Activated T-helper 1 cell treated with anti-CD3 and anti-CD28 coated beads, Interleukin-12 subunit alpha, Interleukin-12 subunit beta, Interleukin-2, Interleukin-4 antibody, amounts not matched to agents 30 ng/mL and 10 ng/mL and 1 ng/mL, durations not matched to agents 14 hours and 24 hours and 36 hours (primary cell): ENCODE measurements at regions of chr17 and their contacts with region 1.

Region 1: GRCh38 chr17:40559954-40560591 is 5.2 kb downstream of the CCR7 start:
- DNase-seq: peak; percentile 74
- H3K4me3 Mint-ChIP-seq: peak overlapping the region; percentile 90
- H3K27ac Mint-ChIP-seq: peak overlapping the region; percentile 99
- H3K4me1 Mint-ChIP-seq: peaks cover 89% of the 10 kb centered on the region
- H3K27me3 Mint-ChIP-seq: peaks cover 2% of the 10 kb centered on the region

Region 2: GRCh38 chr17:40317880-40318829 is 241.9 kb before region 1 on chr17:
- intact Hi-C with region 1: loop called (anchors 1 kb)
- DNase-seq: peak; percentile 87
- H3K4me3 Mint-ChIP-seq: peak overlapping the region; percentile 95
- H3K27ac Mint-ChIP-seq: peak overlapping the region; percentile 92
- H3K4me1 Mint-ChIP-seq: peaks cover 91% of the 10 kb centered on the region
- H3K27me3 Mint-ChIP-seq: peaks cover 3% of the 10 kb centered on the region

Region 3: GRCh38 chr17:40417609-40418427 is 142.3 kb before region 1 on chr17 and contains the start of gene TOP2A:
- intact Hi-C with region 1: loop called (anchors 1 kb)
- DNase-seq: peak; percentile 97
- H3K4me3 Mint-ChIP-seq: peak within 1 kb of the TSS; percentile 96
- H3K27ac Mint-ChIP-seq: peak within 1 kb of the TSS; percentile 92
- H3K4me1 Mint-ChIP-seq: peaks cover 35% of the 10 kb centered on the region
- H3K27me3 Mint-ChIP-seq: peaks cover 2% of the 10 kb centered on the region
- total RNA-seq, gene TOP2A: 161 and 174 TPM in 2 replicates

Region 4: DNA sequence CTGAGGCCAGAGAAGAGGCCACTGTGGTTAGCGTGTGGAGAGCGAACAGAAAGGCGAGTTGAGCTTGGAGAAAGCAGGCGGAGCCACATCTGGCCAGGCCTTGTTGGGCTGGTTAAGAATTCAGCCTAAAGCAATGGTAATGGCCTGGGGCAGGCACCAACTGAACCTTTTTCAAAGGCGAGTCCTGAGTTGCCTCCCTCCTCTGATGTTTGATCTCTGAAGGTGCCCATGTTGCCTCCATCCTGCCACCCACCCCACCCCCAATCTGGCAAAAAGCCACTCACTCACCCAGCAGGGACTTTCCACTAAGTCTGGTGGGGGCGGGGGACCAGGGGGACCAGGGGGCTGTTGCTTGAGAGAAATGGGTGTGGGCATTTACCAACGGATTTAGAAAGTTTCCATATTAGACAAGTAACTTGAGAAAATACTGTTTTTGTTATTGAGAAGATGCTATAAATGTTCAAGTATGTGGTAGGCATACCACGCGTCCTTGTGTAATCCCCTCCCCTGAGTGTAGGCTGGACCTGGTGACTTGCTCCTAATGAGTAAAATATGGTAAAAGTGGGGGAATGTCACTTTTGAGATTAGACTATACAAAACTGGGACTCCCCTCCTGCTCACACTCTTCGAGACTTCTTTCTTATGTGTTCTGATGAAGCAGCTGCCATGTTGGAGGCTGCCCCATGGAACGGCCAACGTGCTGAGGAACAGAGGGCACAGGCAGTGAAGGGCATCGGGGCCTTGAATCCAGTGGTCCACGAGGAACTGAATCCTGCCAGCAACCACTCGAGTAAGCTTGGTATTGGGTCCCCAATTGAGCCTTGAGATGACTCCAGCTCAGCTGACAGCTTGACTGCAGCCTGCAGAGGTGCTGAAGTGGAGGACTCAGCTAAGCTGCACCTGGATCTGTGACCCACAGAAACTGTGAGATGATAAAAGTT is 28.8 kb before region 1 on chr17:
- intact Hi-C with region 1: loop called (anchors 1 kb)
- DNase-seq: peak; percentile 48
- H3K4me3 Mint-ChIP-seq: peak overlapping the region; percentile 82
- H3K27ac Mint-ChIP-seq: peak overlapping the region; percentile 93
- H3K4me1 Mint-ChIP-seq: peaks cover 82% of the 10 kb centered on the region
- H3K27me3 Mint-ChIP-seq: no peaks in the 10 kb centered on the region

Region 5: DNA sequence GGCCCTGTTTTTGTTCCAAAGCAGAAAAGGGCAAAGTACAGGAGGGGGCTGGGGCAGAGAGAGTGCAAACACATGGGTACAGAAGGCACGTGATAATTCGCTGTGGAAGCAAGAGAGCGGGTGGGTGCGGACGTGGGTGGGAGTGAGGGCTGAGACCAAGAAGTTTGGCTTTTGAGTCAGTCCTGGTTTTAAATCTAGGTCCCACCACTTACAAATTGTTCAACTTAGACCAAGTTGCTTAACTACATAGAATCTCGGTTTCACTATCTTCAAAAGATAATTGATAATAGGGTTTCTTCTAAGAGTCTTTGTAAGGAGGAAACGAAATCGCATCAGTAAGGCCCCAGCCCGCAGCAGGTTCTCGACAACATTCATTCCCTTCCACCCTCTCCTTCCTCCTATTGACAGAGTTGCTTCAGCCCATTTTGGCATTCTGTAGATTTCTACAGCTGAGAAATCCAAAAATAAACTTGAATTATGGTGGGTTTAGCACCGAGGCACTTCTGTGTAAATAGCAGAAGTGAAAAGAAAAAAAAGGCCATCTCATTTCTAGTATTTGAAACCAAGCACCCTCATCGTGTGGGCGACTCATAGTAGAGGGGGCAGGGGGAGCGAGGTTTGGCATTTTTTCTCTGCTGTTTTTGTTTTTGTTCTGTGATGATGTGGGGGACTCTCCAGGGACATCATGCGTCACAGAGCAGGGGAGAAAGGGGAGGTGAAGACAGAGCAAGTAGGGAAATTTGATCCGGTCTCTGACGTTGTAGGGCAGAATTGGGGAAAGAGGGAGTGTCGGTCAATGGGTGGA is 38.8 kb after region 1 on chr17:
- intact Hi-C with region 1: loop called (anchors 1 kb)
- DNase-seq: peak; percentile 56
- H3K4me3 Mint-ChIP-seq: peak overlapping the region; percentile 46
- H3K27ac Mint-ChIP-seq: peak overlapping the region; percentile 89
- H3K4me1 Mint-ChIP-seq: peaks cover 87% of the 10 kb centered on the region
- H3K27me3 Mint-ChIP-seq: no peaks in the 10 kb centered on the region

Region 6: GRCh38 chr17:40647624-40648383 is 87.7 kb after region 1 on chr17 and contains the start of gene SMARCE1:
- intact Hi-C with region 1: loop called (anchors 1 kb)
- DNase-seq: peak; percentile 62
- H3K4me3 Mint-ChIP-seq: peak within 1 kb of the TSS; percentile 89
- H3K27ac Mint-ChIP-seq: peak within 1 kb of the TSS; percentile 95
- H3K4me1 Mint-ChIP-seq: peaks cover 55% of the 10 kb centered on the region
- H3K27me3 Mint-ChIP-seq: peaks cover 2% of the 10 kb centered on the region
- total RNA-seq, gene SMARCE1: 125 and 132 TPM in 2 replicates

Region 7: GRCh38 chr17:40726919-40727318 is 166.8 kb after region 1 on chr17:
- intact Hi-C with region 1: no loop called
- DNase-seq: no peak
- H3K4me3 Mint-ChIP-seq: no peak overlapping the region
- H3K27ac Mint-ChIP-seq: no peak overlapping the region
- H3K4me1 Mint-ChIP-seq: no peaks in the 10 kb centered on the region
- H3K27me3 Mint-ChIP-seq: peaks cover 28% of the 10 kb centered on the region